ENCODE measurements at regions of chr12 and their contacts with region 1.

Region 1: GRCh38 chr12:19779393-19780056 is 340.2 kb downstream of the AEBP2 start:
- DNase-seq: peak in 1 of 2 donors; percentile 79
- H3K4me3 ChIP-seq: peak overlapping the region; percentile 10
- H3K27ac ChIP-seq: peak overlapping the region; percentile 69 to 76
- H3K4me1 ChIP-seq: peaks cover 12 to 25% of the 10 kb centered on the region in 2 donors
- H3K27me3 ChIP-seq: no peaks in the 10 kb centered on the region
- CTCF ChIP-seq: peak in 1 of 3 experiments; percentile 18

Region 2: DNA sequence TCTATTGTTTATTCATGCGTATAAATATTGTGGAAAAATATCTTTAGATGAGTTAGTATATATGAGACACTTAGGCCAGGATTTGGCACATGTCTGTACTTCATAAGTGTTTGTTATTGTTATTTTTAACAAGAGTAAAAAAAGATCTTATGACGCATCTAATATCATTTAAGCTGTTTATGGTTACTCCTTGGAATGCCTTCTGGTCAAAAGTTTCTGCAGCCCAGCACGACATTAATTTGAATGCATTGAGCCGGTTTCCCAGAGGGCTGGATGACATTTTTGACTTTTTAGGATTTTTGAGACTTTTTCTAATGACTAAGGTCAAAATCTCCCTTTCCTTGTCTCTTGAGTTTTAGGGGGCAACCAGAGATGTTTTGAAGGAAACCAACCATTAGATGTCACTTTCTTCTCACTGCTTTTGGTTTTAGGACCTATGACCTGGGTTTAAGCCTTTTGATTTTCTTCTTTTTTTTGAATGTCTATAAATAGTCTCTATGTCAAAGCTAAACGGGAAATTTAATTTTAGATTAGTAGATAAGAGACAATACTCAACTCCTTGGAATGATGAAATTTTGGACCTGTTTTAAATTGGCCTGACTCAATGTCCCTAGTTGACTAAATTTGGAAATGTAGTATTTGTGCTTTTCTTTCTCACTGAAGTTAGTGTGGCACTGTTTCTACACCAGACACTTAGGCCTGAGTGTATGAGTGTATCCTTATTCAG is 124.7 kb before region 1 on chr12:
- intact Hi-C with region 1: loop called (anchors 5 kb)
- DNase-seq: no peak
- H3K4me3 ChIP-seq: no peak overlapping the region
- H3K27ac ChIP-seq: peak overlapping the region; percentile 95 to 97
- H3K4me1 ChIP-seq: peaks cover 12 to 24% of the 10 kb centered on the region in 2 donors
- H3K27me3 ChIP-seq: no peaks in the 10 kb centered on the region
- CTCF ChIP-seq: peak in 2 of 3 experiments; percentile 44 to 53

Region 3: GRCh38 chr12:19847294-19848059 is 68.0 kb after region 1 on chr12:
- intact Hi-C with region 1: loop called (anchors 5 kb)
- DNase-seq: no peak
- H3K4me3 ChIP-seq: peak overlapping the region; percentile 10 to 53
- H3K27ac ChIP-seq: peak overlapping the region; percentile 83 to 90
- H3K4me1 ChIP-seq: peaks cover 0 to 24% of the 10 kb centered on the region in 2 donors
- H3K27me3 ChIP-seq: no peaks in the 10 kb centered on the region
- CTCF ChIP-seq: no peak

Region 4: DNA sequence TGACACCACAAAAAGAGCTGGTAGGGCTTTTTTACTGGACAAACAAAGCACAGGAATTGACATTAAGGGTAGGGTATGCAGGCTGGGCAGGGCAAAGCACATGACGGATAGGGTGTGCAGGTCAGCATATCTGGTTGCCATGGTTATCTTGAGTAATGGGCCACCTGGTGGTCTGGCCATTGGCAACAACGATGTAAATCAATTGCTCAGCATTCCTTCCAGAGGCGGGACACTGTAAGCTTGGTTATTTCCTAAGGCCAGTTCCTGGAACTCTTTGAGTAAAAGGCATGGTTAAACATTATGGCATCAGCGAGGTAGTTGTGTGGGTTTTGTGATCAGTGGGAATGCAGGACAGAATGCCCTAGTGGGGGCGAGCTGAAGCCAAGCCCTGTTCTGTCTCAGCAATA is 191.9 kb after region 1 on chr12:
- intact Hi-C with region 1: loop called (anchors 5 kb)
- DNase-seq: no peak
- H3K4me3 ChIP-seq: no peak overlapping the region
- H3K27ac ChIP-seq: peak overlapping the region in 1 of 2 donors; percentile 76
- H3K4me1 ChIP-seq: peaks cover 0 to 37% of the 10 kb centered on the region in 2 donors
- H3K27me3 ChIP-seq: no peaks in the 10 kb centered on the region
- CTCF ChIP-seq: no peak

Region 5: GRCh38 chr12:20125276-20125798 is 345.8 kb after region 1 on chr12:
- intact Hi-C with region 1: loop called (anchors 10 kb)
- DNase-seq: no peak
- H3K4me3 ChIP-seq: no peak overlapping the region
- H3K27ac ChIP-seq: peak overlapping the region in 1 of 2 donors; percentile 23
- H3K4me1 ChIP-seq: peaks cover 0 to 10% of the 10 kb centered on the region in 2 donors
- H3K27me3 ChIP-seq: no peaks in the 10 kb centered on the region
- CTCF ChIP-seq: no peak

Measured in ascending aorta (tissue), 2 donors.